ENCODE measurements at regions of chr6 and their contacts with region 1.

Region 1: GRCh38 chr6:146700078-146700686 is 101.4 kb downstream of the ADGB start:
- DNase-seq: peak; percentile 94
- H3K4me3 Mint-ChIP-seq: no peak overlapping the region
- H3K27ac Mint-ChIP-seq: no peak overlapping the region
- H3K4me1 Mint-ChIP-seq: no peaks in the 10 kb centered on the region
- H3K27me3 Mint-ChIP-seq: peaks cover 29% of the 10 kb centered on the region
- CTCF ChIP-seq: peak; percentile 67

Region 2: DNA sequence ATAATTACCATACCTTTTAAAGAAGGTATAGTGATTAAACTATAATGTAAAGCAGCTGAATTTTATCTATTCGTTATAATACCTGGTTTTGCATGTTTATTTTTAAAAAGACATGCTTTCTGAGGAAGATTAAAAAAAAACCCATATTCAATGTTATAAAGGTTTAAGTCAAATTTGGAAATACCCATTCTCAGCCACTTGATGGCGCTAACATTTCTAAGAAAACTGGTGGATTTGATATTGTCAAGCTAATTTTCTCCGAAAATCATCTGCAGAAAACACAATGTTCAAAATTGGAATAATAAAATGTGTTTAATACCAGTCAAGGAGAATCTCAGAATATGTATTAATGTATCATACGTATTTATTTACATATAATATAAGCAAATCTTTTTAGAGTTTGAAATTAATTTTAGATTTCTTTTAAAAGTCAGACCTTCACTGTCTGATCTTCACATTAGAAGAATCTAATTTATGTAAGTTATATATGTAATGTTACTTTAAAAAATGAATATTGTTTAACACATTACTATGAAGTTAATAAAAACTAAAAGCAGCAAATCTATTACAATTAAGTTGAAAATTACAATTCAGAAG is 771.0 kb before region 1 on chr6:
- CTCF ChIA-PET with region 1: interaction called, 27 read pairs
- POLR2A ChIA-PET with region 1: interaction called, 3 read pairs
- intact Hi-C with region 1: loop called (anchors 1 kb)
- DNase-seq: peak; percentile 48
- H3K4me3 Mint-ChIP-seq: no peak overlapping the region
- H3K27ac Mint-ChIP-seq: no peak overlapping the region
- H3K4me1 Mint-ChIP-seq: no peaks in the 10 kb centered on the region
- H3K27me3 Mint-ChIP-seq: no peaks in the 10 kb centered on the region
- CTCF ChIP-seq: peak; percentile 55

Region 3: DNA sequence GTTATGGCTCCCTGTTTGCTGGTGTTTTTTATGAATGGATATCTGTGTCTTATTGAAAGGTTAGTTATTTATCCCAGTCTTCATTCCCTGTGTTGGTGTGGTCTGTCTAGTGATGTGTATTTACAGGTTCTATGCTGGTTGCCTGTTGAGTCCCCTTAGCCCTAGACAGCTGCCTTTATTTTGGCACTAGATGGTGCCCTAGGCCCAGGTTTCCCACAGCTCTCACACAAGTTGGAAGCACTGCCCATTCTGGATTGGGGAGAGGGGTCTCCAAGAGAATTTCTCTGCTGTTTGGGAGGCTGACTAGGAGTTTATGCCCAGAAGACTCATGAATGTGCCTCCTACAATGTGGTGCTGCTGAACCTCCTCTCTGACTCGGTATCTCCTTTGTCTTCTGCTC is 658.9 kb before region 1 on chr6:
- CTCF ChIA-PET with region 1: interaction called, 23 read pairs
- POLR2A ChIA-PET with region 1: interaction called, 3 read pairs
- intact Hi-C with region 1: loop called (anchors 1 kb)
- DNase-seq: peak; percentile 66
- H3K4me3 Mint-ChIP-seq: no peak overlapping the region
- H3K27ac Mint-ChIP-seq: no peak overlapping the region
- H3K4me1 Mint-ChIP-seq: no peaks in the 10 kb centered on the region
- H3K27me3 Mint-ChIP-seq: peaks cover 86% of the 10 kb centered on the region
- CTCF ChIP-seq: peak; percentile 51

Region 4: GRCh38 chr6:146123616-146124015 is 576.6 kb before region 1 on chr6:
- CTCF ChIA-PET with region 1: no interaction called
- POLR2A ChIA-PET with region 1: no interaction called
- intact Hi-C with region 1: no loop called
- DNase-seq: no peak
- H3K4me3 Mint-ChIP-seq: no peak overlapping the region
- H3K27ac Mint-ChIP-seq: no peak overlapping the region
- H3K4me1 Mint-ChIP-seq: no peaks in the 10 kb centered on the region
- H3K27me3 Mint-ChIP-seq: peaks cover 40% of the 10 kb centered on the region
- CTCF ChIP-seq: no peak

Region 5: DNA sequence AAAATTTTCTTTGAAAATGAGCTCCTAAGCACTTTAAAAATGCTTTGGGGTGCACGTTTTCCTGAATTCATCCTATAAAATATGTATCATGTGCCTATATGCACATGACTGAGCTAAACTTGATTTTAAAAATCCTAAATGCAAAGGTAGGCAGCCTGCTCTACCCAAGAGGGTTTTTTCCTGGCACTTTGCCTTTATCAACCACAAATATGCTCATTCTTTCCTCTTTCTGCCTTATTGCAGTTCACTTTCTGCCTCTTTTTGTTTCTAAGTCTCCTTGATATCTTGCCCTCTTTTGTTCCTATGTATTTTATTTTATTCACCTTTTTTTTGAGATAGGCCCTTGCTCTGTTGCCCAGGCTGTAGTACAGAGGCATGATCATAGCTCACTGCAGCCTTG is 442.0 kb before region 1 on chr6:
- CTCF ChIA-PET with region 1: no interaction called
- POLR2A ChIA-PET with region 1: no interaction called
- intact Hi-C with region 1: loop called (anchors 1 kb)
- DNase-seq: peak; percentile 5
- H3K4me3 Mint-ChIP-seq: no peak overlapping the region
- H3K27ac Mint-ChIP-seq: peak overlapping the region; percentile 14
- H3K4me1 Mint-ChIP-seq: peaks cover 5% of the 10 kb centered on the region
- H3K27me3 Mint-ChIP-seq: no peaks in the 10 kb centered on the region
- CTCF ChIP-seq: no peak

Region 6: DNA sequence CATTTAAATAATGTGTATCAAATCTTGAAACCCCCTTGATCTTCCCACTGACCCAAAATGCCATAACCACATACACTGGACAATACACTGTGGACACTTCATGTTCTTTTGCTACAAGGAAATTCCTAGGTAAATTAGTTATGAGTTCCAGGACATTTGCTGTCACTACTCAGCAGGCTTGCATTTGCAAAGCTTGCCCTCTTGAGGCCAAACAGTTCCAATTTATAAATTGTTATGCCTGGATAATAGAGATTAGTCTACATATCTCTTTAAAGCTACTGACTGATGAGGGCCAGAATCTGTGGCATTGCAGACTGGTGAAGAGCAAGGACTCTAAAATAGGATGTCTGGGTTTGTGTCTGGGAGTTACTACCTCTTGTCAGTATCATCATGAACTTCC is 174.0 kb before region 1 on chr6:
- CTCF ChIA-PET with region 1: interaction called, 3 read pairs
- POLR2A ChIA-PET with region 1: no interaction called
- intact Hi-C with region 1: loop called (anchors 5 kb)
- DNase-seq: peak; percentile 6
- H3K4me3 Mint-ChIP-seq: no peak overlapping the region
- H3K27ac Mint-ChIP-seq: no peak overlapping the region
- H3K4me1 Mint-ChIP-seq: no peaks in the 10 kb centered on the region
- H3K27me3 Mint-ChIP-seq: no peaks in the 10 kb centered on the region
- CTCF ChIP-seq: peak; percentile 21

Region 7: GRCh38 chr6:146543211-146543939 is 156.8 kb before region 1 on chr6 and contains the start of gene RAB32:
- CTCF ChIA-PET with region 1: interaction called, 4 read pairs
- POLR2A ChIA-PET with region 1: interaction called, 12 read pairs
- intact Hi-C with region 1: loop called (anchors 1 kb)
- DNase-seq: peak; percentile 93
- H3K4me3 Mint-ChIP-seq: peak within 1 kb of the TSS; percentile 94
- H3K27ac Mint-ChIP-seq: peak within 1 kb of the TSS; percentile 97
- H3K4me1 Mint-ChIP-seq: peaks cover 13% of the 10 kb centered on the region
- H3K27me3 Mint-ChIP-seq: no peaks in the 10 kb centered on the region
- CTCF ChIP-seq: peak; percentile 64
- total RNA-seq, gene RAB32: 39.7 and 73.6 TPM in 2 replicates

Region 8: DNA sequence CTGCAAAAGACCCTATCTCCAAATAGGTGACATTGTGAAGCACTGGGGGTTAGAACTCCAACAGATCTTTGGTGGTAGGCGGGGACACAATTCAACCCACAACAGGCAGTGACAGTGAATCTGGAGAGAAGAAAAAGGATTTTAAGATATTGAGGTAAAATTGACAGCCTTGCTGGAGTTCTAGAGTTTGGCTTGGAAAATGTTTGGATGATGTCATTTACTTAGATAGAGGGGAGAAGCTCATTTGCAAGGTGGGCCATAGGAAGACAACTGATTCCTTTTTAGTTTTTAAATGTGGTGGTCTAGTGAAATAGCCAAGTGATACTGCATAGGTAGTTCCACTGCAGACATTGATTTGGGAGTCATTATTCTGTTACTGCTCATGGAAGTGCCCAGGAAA is 48.8 kb after region 1 on chr6:
- CTCF ChIA-PET with region 1: no interaction called
- POLR2A ChIA-PET with region 1: no interaction called
- intact Hi-C with region 1: no loop called
- DNase-seq: no peak
- H3K4me3 Mint-ChIP-seq: no peak overlapping the region
- H3K27ac Mint-ChIP-seq: no peak overlapping the region
- H3K4me1 Mint-ChIP-seq: no peaks in the 10 kb centered on the region
- H3K27me3 Mint-ChIP-seq: peaks cover 26% of the 10 kb centered on the region
- CTCF ChIP-seq: no peak

Measured in MCF 10A (cell line).